ENCODE measurements at regions of chr11 and their contacts with region 1.

Region 1: GRCh38 chr11:9613118-9613829 is 39.8 kb downstream of the WEE1 start:
- DNase-seq: peak; percentile 90
- ATAC-seq: peak; percentile 31
- H3K4me3 ChIP-seq: peak overlapping the region; percentile 48 to 75 (median 66)
- H3K4me3 Mint-ChIP-seq: peak overlapping the region; percentile 98
- H3K27ac ChIP-seq: peak overlapping the region; percentile 98
- H3K27ac Mint-ChIP-seq: peak overlapping the region; percentile 99
- H3K4me1 ChIP-seq: peaks cover 66 to 78% of the 10 kb centered on the region in 2 donors
- H3K4me1 Mint-ChIP-seq: peaks cover 72% of the 10 kb centered on the region
- H3K27me3 ChIP-seq: no peaks in the 10 kb centered on the region
- H3K27me3 Mint-ChIP-seq: no peaks in the 10 kb centered on the region
- CTCF ChIP-seq: peak; percentile 92

Region 2: GRCh38 chr11:9506489-9507276 is 106.6 kb before region 1 on chr11:
- CTCF ChIA-PET with region 1: interaction called, 27 read pairs
- POLR2A ChIA-PET with region 1: no interaction called
- intact Hi-C with region 1: no loop called
- DNase-seq: peak; percentile 81
- ATAC-seq: peak; percentile 69
- H3K4me3 ChIP-seq: no peak overlapping the region
- H3K4me3 Mint-ChIP-seq: no peak overlapping the region
- H3K27ac ChIP-seq: no peak overlapping the region
- H3K27ac Mint-ChIP-seq: no peak overlapping the region
- H3K4me1 ChIP-seq: peaks cover 3 to 7% of the 10 kb centered on the region in 2 donors
- H3K4me1 Mint-ChIP-seq: peaks cover 9% of the 10 kb centered on the region
- H3K27me3 ChIP-seq: no peaks in the 10 kb centered on the region
- H3K27me3 Mint-ChIP-seq: no peaks in the 10 kb centered on the region
- CTCF ChIP-seq: peak; percentile 92

Region 3: DNA sequence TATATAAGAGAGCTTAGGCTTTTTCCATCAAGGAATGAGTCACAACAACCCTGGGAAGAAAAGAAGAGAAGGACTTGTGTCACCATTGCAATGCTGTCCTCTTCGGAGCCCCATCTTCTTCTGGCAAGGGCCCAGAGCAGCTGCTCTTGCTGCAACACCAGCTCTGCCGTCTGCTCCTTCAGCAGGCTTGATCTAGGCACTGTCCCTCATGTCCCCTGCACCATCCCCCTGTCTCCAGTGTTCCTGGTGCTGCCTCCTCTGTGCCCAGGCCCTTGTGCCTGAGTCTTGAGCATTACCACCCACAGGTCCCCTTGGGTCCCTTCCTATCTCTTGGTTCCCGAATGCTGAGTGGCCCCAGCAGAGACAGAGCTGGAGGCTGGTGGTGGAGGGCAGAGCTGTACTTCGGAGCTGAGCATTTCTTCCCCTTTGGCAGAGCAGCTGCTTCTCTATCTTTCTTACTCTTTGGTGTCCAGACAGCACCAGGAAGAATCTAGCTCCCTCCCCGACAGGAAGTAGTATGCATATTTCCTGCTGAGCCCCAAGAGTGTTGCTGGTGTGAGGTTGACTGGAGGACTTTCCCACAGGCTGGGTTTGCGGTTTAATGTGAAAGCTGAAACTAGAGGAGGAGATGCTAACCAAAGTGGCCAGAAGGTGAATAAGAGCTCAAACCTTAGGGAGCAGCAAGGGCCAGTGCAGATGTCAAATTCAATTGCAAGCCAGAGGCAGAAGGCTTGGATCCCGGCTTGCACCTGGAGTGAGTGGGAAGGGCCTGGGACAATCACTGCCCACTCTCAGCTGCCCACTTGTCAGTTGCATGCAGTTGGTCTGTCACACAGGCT is 12.0 kb before region 1 on chr11:
- CTCF ChIA-PET with region 1: interaction called, 95 read pairs
- POLR2A ChIA-PET with region 1: interaction called, 21 read pairs
- intact Hi-C with region 1: loop called (anchors 1 kb)
- DNase-seq: peak; percentile 89
- ATAC-seq: peak; percentile 80
- H3K4me3 ChIP-seq: peak overlapping the region; percentile 26 to 52 (median 44)
- H3K4me3 Mint-ChIP-seq: peak overlapping the region; percentile 79
- H3K27ac ChIP-seq: peak overlapping the region; percentile 82 to 85
- H3K27ac Mint-ChIP-seq: peak overlapping the region; percentile 87
- H3K4me1 ChIP-seq: peaks cover 36 to 45% of the 10 kb centered on the region in 2 donors
- H3K4me1 Mint-ChIP-seq: peaks cover 51% of the 10 kb centered on the region
- H3K27me3 ChIP-seq: no peaks in the 10 kb centered on the region
- H3K27me3 Mint-ChIP-seq: no peaks in the 10 kb centered on the region
- CTCF ChIP-seq: no peak

Region 4: DNA sequence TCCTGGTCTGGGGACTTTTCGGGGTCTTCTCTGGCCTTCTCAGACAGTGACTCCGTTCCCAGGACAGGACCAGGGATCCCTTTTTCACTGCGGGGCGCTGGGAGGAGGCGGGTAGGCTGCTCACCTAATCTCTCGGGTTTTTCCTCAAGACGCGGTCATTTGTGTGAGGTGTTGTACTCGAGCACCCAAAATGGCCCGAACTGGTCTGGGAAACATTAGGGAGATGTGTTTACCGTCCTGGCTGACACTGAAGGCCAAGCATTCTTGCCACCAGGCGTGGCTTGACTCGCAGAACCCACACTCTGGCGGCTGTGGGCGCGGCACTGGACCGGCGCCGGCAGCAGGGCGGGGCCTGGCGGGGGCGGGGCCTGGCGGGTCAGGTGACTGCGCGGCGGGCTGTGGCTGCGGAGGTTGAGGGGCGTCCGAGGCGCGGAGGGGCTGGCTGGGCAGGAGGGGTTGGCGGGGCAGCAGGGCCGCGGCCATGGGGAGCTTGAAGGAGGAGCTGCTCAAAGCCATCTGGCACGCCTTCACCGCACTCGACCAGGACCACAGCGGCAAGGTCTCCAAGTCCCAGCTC is 50.5 kb after region 1 on chr11 and contains the start of gene SWAP70:
- CTCF ChIA-PET with region 1: interaction called, 43 read pairs
- POLR2A ChIA-PET with region 1: interaction called, 25 read pairs
- intact Hi-C with region 1: loop called (anchors 1 kb)
- DNase-seq: peak; percentile 93
- ATAC-seq: peak; percentile 85
- H3K4me3 ChIP-seq: peak within 1 kb of the TSS; percentile 83 to 100 (median 94)
- H3K4me3 Mint-ChIP-seq: peak within 1 kb of the TSS; percentile 94
- H3K27ac ChIP-seq: peak within 1 kb of the TSS; percentile 84 to 95
- H3K27ac Mint-ChIP-seq: peak within 1 kb of the TSS; percentile 88
- H3K4me1 ChIP-seq: peaks cover 47 to 50% of the 10 kb centered on the region in 2 donors
- H3K4me1 Mint-ChIP-seq: peaks cover 63% of the 10 kb centered on the region
- H3K27me3 ChIP-seq: no peaks in the 10 kb centered on the region
- H3K27me3 Mint-ChIP-seq: no peaks in the 10 kb centered on the region
- CTCF ChIP-seq: no peak
- total RNA-seq, gene SWAP70: 200 and 203 TPM in 2 replicates

Region 5: DNA sequence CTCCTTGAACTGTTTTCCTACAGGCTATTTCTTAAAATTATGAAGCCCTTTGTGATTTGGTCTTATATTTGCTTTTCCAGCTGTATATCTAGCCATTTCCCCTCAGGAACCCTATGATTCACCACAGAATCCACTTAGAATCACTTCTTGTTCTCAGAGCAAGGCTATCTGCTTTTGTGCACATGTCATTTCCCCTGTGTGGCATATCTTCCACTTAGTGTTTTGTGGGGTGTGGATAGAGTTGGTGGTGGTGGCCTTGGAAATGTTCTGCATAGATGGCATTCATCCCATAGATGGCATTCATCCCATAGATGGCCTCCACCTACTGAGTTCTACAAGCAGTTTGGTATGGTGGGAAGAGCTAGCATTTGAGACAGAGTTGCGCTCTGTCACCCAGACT is 95.3 kb after region 1 on chr11:
- CTCF ChIA-PET with region 1: interaction called, 13 read pairs
- POLR2A ChIA-PET with region 1: no interaction called
- intact Hi-C with region 1: no loop called
- DNase-seq: no peak
- ATAC-seq: no peak
- H3K4me3 ChIP-seq: no peak overlapping the region
- H3K4me3 Mint-ChIP-seq: peak overlapping the region; percentile 20
- H3K27ac ChIP-seq: peak overlapping the region; percentile 25 to 66
- H3K27ac Mint-ChIP-seq: peak overlapping the region; percentile 84
- H3K4me1 ChIP-seq: peaks cover 69 to 75% of the 10 kb centered on the region in 2 donors
- H3K4me1 Mint-ChIP-seq: peaks cover 65% of the 10 kb centered on the region
- H3K27me3 ChIP-seq: no peaks in the 10 kb centered on the region
- H3K27me3 Mint-ChIP-seq: no peaks in the 10 kb centered on the region
- CTCF ChIP-seq: no peak

Region 6: GRCh38 chr11:9739123-9739894 is 126.0 kb after region 1 on chr11:
- CTCF ChIA-PET with region 1: interaction called, 37 read pairs
- POLR2A ChIA-PET with region 1: interaction called, 3 read pairs
- intact Hi-C with region 1: no loop called
- DNase-seq: peak; percentile 77
- ATAC-seq: peak; percentile 85
- H3K4me3 ChIP-seq: no peak overlapping the region
- H3K4me3 Mint-ChIP-seq: peak overlapping the region; percentile 84
- H3K27ac ChIP-seq: peak overlapping the region; percentile 70 to 94
- H3K27ac Mint-ChIP-seq: peak overlapping the region; percentile 98
- H3K4me1 ChIP-seq: peaks cover 53 to 57% of the 10 kb centered on the region in 2 donors
- H3K4me1 Mint-ChIP-seq: peaks cover 67% of the 10 kb centered on the region
- H3K27me3 ChIP-seq: no peaks in the 10 kb centered on the region
- H3K27me3 Mint-ChIP-seq: no peaks in the 10 kb centered on the region
- CTCF ChIP-seq: no peak

Region 7: DNA sequence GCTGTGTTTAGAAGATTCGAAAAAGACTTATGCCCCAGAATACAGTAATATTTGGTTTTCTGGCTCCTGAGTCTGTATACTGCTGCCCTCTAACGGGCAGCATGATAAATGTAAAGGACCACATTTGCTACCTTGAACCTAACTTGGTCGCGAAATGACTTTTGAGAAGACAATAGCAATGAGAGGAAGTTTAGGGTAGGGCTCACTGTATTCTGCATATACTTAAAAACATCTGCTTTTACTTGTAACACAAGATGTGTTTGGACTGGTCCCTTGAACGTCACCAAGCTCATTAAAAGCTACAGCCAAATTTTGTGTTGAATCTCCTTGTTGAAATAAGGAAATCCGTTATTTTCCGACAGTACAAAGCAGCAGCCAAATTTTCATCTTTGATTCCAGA is 359.7 kb after region 1 on chr11:
- CTCF ChIA-PET with region 1: interaction called, 7 read pairs
- POLR2A ChIA-PET with region 1: no interaction called
- intact Hi-C with region 1: loop called (anchors 2 kb)
- DNase-seq: peak; percentile 70
- ATAC-seq: peak; percentile 76
- H3K4me3 ChIP-seq: no peak overlapping the region
- H3K4me3 Mint-ChIP-seq: no peak overlapping the region
- H3K27ac ChIP-seq: no peak overlapping the region
- H3K27ac Mint-ChIP-seq: no peak overlapping the region
- H3K4me1 ChIP-seq: peaks cover 0 to 3% of the 10 kb centered on the region in 2 donors
- H3K4me1 Mint-ChIP-seq: peaks cover 4% of the 10 kb centered on the region
- H3K27me3 ChIP-seq: no peaks in the 10 kb centered on the region
- H3K27me3 Mint-ChIP-seq: no peaks in the 10 kb centered on the region
- CTCF ChIP-seq: peak; percentile 88

Measured in B cell (primary cell).